Mucosa of descending colon (tissue), 3 donors: ENCODE measurements at regions of chr6 and their contacts with region 1.

Region 1: GRCh38 chr6:86215323-86215722 is 572.6 kb upstream of the SYNCRIP start:
- DNase-seq: no peak
- ATAC-seq: no peak
- H3K4me3 ChIP-seq: no peak overlapping the region
- H3K4me1 ChIP-seq: no peaks in the 10 kb centered on the region
- CTCF ChIP-seq: no peak

Region 2: GRCh38 chr6:85669735-85670194 is 545.6 kb before region 1 on chr6:
- intact Hi-C with region 1: no loop called
- DNase-seq: no peak
- ATAC-seq: peak; percentile 81
- H3K4me3 ChIP-seq: no peak overlapping the region
- H3K4me1 ChIP-seq: no peaks in the 10 kb centered on the region
- CTCF ChIP-seq: no peak

Region 3: GRCh38 chr6:86380571-86381136 is 165.3 kb after region 1 on chr6:
- intact Hi-C with region 1: loop called in 1 of 2 experiments (anchors 5 kb)
- DNase-seq: no peak
- ATAC-seq: no peak
- H3K4me3 ChIP-seq: no peak overlapping the region
- H3K4me1 ChIP-seq: no peaks in the 10 kb centered on the region
- CTCF ChIP-seq: no peak